Caco-2 (cell line): ENCODE measurements at regions of chr5 and their contacts with region 1.

Region 1: GRCh38 chr5:32709781-32710549 is 1.2 kb upstream of the NPR3 start:
- DNase-seq: peak; percentile 65 to 78
- H3K4me3 ChIP-seq: peak overlapping the region; percentile 36
- H3K4me3 Mint-ChIP-seq: peak overlapping the region; percentile 76
- H3K27ac Mint-ChIP-seq: no peak overlapping the region
- H3K4me1 ChIP-seq: no peaks in the 10 kb centered on the region
- H3K4me1 Mint-ChIP-seq: no peaks in the 10 kb centered on the region
- H3K27me3 ChIP-seq: no peaks in the 10 kb centered on the region
- H3K27me3 Mint-ChIP-seq: peaks cover 6% of the 10 kb centered on the region
- CTCF ChIP-seq: peak; percentile 73 to 78

Region 2: GRCh38 chr5:32852535-32852934 is 142.6 kb after region 1 on chr5:
- CTCF ChIA-PET with region 1: no interaction called
- POLR2A ChIA-PET with region 1: no interaction called
- intact Hi-C with region 1: loop called (anchors 1 kb)
- DNase-seq: peak; percentile 2 to 39
- H3K4me3 ChIP-seq: no peak overlapping the region
- H3K4me3 Mint-ChIP-seq: no peak overlapping the region
- H3K27ac Mint-ChIP-seq: no peak overlapping the region
- H3K4me1 ChIP-seq: no peaks in the 10 kb centered on the region
- H3K4me1 Mint-ChIP-seq: no peaks in the 10 kb centered on the region
- H3K27me3 ChIP-seq: no peaks in the 10 kb centered on the region; the same call in 1 of the 2 replicates
- H3K27me3 Mint-ChIP-seq: peaks cover 14% of the 10 kb centered on the region
- CTCF ChIP-seq: peak in 1 of 2 experiments; percentile 12

Region 3: DNA sequence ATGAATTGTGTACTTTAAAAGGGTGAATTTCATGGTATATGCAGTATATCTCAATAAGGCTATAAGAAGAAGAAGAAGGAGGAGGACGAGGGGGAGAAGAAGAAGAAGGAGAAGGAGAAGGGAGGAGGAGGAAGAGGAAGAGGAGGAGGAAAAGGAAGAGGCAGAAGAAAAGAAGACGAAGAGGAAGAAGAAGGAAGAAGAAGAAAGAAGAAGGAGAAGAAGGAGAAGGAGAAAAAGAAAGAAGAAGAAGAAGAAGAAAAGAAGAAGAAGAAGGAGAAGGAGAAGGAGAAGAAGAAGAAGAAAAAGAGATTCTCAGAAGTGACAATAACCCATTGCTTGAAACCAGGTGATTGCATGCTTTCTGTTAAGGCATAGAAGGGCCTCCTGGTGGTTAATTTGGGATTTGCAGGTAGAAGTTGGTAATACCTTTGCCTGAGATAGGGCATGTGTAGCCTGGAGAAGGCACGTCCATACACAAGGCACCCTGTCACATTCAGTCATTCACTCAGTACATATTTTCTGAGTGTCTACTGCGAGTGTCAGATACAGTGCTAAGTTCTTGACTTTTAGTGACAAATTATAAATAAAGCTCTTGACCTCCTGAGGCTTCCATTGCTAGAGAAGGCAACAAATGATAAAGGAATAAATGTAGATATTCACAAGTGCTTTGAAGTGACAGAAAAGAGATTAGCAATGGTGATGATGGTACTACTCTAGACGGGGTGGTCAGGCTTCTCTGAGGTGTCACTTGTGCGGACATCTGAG is 232.4 kb after region 1 on chr5:
- CTCF ChIA-PET with region 1: no interaction called
- POLR2A ChIA-PET with region 1: no interaction called
- intact Hi-C with region 1: loop called (anchors 1 kb)
- DNase-seq: peak; percentile 35 to 56
- H3K4me3 ChIP-seq: no peak overlapping the region
- H3K4me3 Mint-ChIP-seq: no peak overlapping the region
- H3K27ac Mint-ChIP-seq: no peak overlapping the region
- H3K4me1 ChIP-seq: no peaks in the 10 kb centered on the region
- H3K4me1 Mint-ChIP-seq: no peaks in the 10 kb centered on the region
- H3K27me3 ChIP-seq: no peaks in the 10 kb centered on the region
- H3K27me3 Mint-ChIP-seq: peaks cover 8% of the 10 kb centered on the region
- CTCF ChIP-seq: peak; percentile 33 to 54

Region 4: DNA sequence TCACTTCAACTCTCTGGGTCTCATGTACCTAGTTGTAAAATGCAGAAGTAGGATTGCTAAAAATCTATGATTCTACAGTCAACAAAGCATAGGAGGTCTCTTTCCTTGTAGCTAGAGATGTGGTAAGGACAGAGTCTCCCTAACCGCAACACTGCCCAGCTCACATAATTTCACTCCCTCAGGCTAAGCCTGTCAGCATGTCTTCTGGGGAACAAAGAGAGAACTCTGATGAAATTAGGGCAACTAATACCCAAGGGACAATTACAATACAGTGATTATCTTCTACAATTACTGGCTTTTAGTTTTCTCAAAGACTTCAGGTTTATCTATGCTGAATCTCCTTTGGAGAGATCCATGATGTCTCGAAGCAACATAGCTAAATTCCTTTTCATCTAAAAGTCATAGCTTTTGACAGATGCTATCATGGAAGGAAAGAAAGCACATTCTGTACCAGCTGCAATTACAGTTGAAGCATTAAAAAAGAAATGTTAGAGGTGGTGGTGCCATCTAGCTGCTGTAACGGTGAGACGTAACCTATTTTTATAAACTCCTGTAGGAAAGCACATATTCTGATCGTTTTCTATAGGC is 589.8 kb after region 1 on chr5:
- CTCF ChIA-PET with region 1: interaction called, 3 read pairs
- POLR2A ChIA-PET with region 1: no interaction called
- intact Hi-C with region 1: loop called (anchors 1 kb)
- DNase-seq: peak in 1 of 2 experiments; percentile 4
- H3K4me3 ChIP-seq: no peak overlapping the region
- H3K4me3 Mint-ChIP-seq: no peak overlapping the region
- H3K27ac Mint-ChIP-seq: no peak overlapping the region
- H3K4me1 ChIP-seq: peaks cover 21% of the 10 kb centered on the region
- H3K4me1 Mint-ChIP-seq: peaks cover 8% of the 10 kb centered on the region
- H3K27me3 ChIP-seq: no peaks in the 10 kb centered on the region
- H3K27me3 Mint-ChIP-seq: peaks cover 2% of the 10 kb centered on the region
- CTCF ChIP-seq: peak; percentile 29 to 45